Left cardiac atrium (tissue), 4 donors: ENCODE measurements at regions of chr5 and their contacts with region 1.

Region 1: GRCh38 chr5:33969572-33970452 is 14.7 kb downstream of the SLC45A2 start:
- DNase-seq: no peak
- ATAC-seq: peak; percentile 64 to 81

Region 2: GRCh38 chr5:33129309-33129708 is 840.5 kb before region 1 on chr5:
- intact Hi-C with region 1: no loop called
- DNase-seq: no peak
- ATAC-seq: peak in 1 of 2 donors; percentile 81

Region 3: GRCh38 chr5:33440482-33441240 is 529.2 kb before region 1 on chr5 and contains the start of gene TARS1:
- intact Hi-C with region 1: loop called (anchors 2 to 10 kb)
- DNase-seq: peak; percentile 98
- ATAC-seq: peak; percentile 98 to 99
- total RNA-seq, gene TARS1: 57.3 to 86.0 TPM